Mammary epithelial cell (primary cell): ENCODE measurements at regions of chr9 and their contacts with region 1.

Region 1: DNA sequence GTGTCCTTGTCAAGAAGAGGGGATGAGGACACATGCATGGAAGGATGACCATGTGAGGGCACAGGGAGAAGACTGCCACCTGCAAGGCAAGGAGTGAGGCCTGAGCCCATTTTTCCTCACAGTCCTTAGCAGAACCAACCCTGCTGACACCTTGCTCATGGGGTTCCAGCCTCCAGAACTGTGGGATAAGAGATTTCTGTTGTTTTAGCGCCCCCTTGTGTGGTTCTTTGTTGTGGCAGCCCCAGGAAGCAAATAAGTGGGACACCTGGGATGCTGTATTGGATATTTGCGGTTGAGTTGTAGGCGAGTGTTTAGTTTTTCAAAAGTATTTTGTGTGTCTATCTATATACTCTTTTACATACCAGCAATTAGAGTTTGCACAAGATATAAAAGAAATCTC is 206.4 kb downstream of the NXNL2 start:
- DNase-seq: no peak
- H3K4me3 ChIP-seq: no peak overlapping the region
- H3K27ac ChIP-seq: no peak overlapping the region
- H3K4me1 ChIP-seq: no peaks in the 10 kb centered on the region
- H3K27me3 ChIP-seq: no peaks in the 10 kb centered on the region
- CTCF ChIP-seq: peak in 1 of 2 donors; percentile 16

Region 2: DNA sequence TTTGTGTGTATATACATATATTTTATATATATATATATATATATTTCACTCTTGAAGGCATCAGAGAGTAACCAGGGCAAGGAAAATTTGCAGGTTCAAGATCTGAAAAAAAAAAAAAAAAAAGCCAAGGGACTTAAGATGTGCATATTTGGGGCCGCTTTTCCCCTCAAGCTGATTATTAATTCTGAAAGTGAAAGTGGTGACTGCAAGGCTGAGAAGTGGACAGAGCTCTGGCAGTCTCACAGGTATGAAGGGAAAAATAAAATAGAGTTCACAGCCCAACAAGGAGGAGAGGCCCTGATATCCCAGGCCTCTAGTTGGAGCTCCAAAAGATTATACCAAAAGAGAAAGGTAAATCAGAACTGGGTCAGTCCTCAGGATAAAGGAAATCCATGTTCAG is 1559.7 kb before region 1 on chr9:
- CTCF ChIA-PET with region 1: interaction called, 25 read pairs
- dilution Hi-C with region 1: no loop called
- in situ Hi-C with region 1: no loop called
- intact Hi-C with region 1: no loop called
- DNase-seq: no peak
- H3K4me3 ChIP-seq: no peak overlapping the region
- H3K27ac ChIP-seq: no peak overlapping the region
- H3K4me1 ChIP-seq: peaks cover 24% of the 10 kb centered on the region
- H3K27me3 ChIP-seq: no peaks in the 10 kb centered on the region
- CTCF ChIP-seq: no peak

Region 3: DNA sequence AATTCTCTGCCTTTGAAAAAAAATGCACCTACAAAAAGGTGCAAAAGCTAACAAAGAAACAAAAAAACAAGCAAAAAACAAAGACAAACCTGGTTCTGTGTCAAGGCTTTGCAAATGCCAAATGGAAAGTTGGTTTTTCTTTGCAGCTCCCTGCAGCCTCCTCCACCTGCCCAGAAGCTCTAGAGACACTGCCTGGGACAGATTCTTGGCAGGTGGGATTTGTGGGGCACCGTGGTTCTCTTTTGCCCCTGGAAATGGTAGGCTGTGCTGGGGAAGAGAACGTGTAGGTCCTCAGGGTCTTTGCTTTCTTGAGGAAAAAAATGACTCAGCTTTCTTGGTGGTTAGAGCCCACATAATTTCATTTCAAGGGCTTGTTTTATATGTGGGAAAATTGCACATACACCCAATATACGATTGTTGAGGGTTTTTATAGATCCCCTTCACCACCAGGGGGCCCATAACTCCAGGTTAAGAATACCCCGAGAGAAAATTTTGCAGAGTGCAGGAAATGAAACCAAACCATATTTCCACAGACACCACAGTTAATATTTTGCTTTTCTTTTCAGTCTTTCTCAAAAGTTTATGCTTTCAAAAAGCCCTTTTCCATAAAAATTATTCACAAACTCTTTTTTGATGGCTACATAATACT is 147.7 kb before region 1 on chr9:
- CTCF ChIA-PET with region 1: no interaction called
- dilution Hi-C with region 1: no loop called
- in situ Hi-C with region 1: no loop called
- intact Hi-C with region 1: loop called (anchors 1 kb)
- DNase-seq: peak; percentile 28
- H3K4me3 ChIP-seq: no peak overlapping the region
- H3K27ac ChIP-seq: no peak overlapping the region
- H3K4me1 ChIP-seq: no peaks in the 10 kb centered on the region
- H3K27me3 ChIP-seq: peaks cover 4% of the 10 kb centered on the region
- CTCF ChIP-seq: peak; percentile 58 to 64

Region 4: GRCh38 chr9:88702985-88703384 is 38.4 kb before region 1 on chr9:
- CTCF ChIA-PET with region 1: no interaction called
- dilution Hi-C with region 1: loop called (anchors 5 kb)
- in situ Hi-C with region 1: no loop called
- intact Hi-C with region 1: no loop called
- DNase-seq: no peak
- H3K4me3 ChIP-seq: no peak overlapping the region
- H3K27ac ChIP-seq: no peak overlapping the region
- H3K4me1 ChIP-seq: no peaks in the 10 kb centered on the region
- H3K27me3 ChIP-seq: no peaks in the 10 kb centered on the region
- CTCF ChIP-seq: no peak

Region 5: DNA sequence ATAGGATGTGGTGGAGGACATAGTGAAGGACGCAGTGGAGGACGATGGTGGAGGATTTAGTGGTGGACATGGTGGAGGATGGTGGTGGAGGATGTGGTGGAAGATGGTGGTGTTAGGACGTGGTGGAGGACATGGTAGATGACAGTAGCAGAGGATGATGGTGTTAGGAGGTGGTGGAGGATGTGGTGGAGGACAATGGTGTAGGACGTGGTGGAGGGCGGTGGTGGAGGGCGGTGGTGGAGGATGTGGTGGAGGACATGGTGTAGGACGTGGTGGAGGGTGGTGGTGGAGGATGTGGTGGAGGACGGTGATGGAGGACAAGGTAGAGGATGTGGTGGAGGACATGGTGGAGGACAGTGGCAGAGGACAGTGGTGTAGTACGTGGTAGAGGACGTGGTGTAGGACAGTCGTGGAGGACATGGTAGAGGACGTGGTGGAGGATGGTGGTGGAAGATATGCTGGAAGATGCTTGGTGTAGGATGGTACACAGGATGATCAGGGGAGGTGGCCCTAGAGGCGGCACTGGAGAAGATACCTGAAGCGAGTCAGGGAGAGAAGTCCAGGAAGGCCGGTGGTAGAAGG is 318.7 kb after region 1 on chr9:
- CTCF ChIA-PET with region 1: no interaction called
- dilution Hi-C with region 1: no loop called
- in situ Hi-C with region 1: no loop called
- intact Hi-C with region 1: no loop called
- DNase-seq: no peak
- H3K4me3 ChIP-seq: no peak overlapping the region
- H3K27ac ChIP-seq: no peak overlapping the region
- H3K4me1 ChIP-seq: no peaks in the 10 kb centered on the region
- H3K27me3 ChIP-seq: no peaks in the 10 kb centered on the region
- CTCF ChIP-seq: no peak

Region 6: GRCh38 chr9:89602978-89603766 is 861.8 kb after region 1 on chr9:
- CTCF ChIA-PET with region 1: no interaction called
- dilution Hi-C with region 1: no loop called
- in situ Hi-C with region 1: no loop called
- intact Hi-C with region 1: no loop called
- DNase-seq: peak; percentile 72
- H3K4me3 ChIP-seq: peak overlapping the region; percentile 1 to 31 (median 19)
- H3K27ac ChIP-seq: no peak overlapping the region
- H3K4me1 ChIP-seq: peaks cover 35% of the 10 kb centered on the region
- H3K27me3 ChIP-seq: peaks cover 2% of the 10 kb centered on the region
- CTCF ChIP-seq: peak; percentile 84 to 95